ENCODE measurements at regions of chr22 and their contacts with region 1.

Region 1: GRCh38 chr22:33579448-33580093 is 340.7 kb downstream of the LARGE1 start:
- DNase-seq: peak in 1 of 5 donors; percentile 2
- H3K4me3 ChIP-seq: no peak overlapping the region
- H3K4me3 Mint-ChIP-seq: no peak overlapping the region
- H3K27ac ChIP-seq: no peak overlapping the region
- H3K27ac Mint-ChIP-seq: no peak overlapping the region
- H3K4me1 ChIP-seq: no peaks in the 10 kb centered on the region
- H3K4me1 Mint-ChIP-seq: no peaks in the 10 kb centered on the region
- H3K27me3 ChIP-seq: no peaks in the 10 kb centered on the region
- H3K27me3 Mint-ChIP-seq: no peaks in the 10 kb centered on the region

Region 2: GRCh38 chr22:33302049-33302545 is 277.5 kb before region 1 on chr22:
- CTCF ChIA-PET with region 1: interaction called, 3 read pairs
- POLR2A ChIA-PET with region 1: no interaction called
- intact Hi-C with region 1: loop called (anchors 10 kb)
- DNase-seq: peak in 4 of 5 donors; percentile 4 to 10 (median 8)
- H3K4me3 ChIP-seq: no peak overlapping the region
- H3K4me3 Mint-ChIP-seq: no peak overlapping the region
- H3K27ac ChIP-seq: no peak overlapping the region
- H3K27ac Mint-ChIP-seq: no peak overlapping the region
- H3K4me1 ChIP-seq: no peaks in the 10 kb centered on the region
- H3K4me1 Mint-ChIP-seq: no peaks in the 10 kb centered on the region
- H3K27me3 ChIP-seq: no peaks in the 10 kb centered on the region
- H3K27me3 Mint-ChIP-seq: no peaks in the 10 kb centered on the region